ENCODE measurements at regions of chr1 and their contacts with region 1.

Region 1: DNA sequence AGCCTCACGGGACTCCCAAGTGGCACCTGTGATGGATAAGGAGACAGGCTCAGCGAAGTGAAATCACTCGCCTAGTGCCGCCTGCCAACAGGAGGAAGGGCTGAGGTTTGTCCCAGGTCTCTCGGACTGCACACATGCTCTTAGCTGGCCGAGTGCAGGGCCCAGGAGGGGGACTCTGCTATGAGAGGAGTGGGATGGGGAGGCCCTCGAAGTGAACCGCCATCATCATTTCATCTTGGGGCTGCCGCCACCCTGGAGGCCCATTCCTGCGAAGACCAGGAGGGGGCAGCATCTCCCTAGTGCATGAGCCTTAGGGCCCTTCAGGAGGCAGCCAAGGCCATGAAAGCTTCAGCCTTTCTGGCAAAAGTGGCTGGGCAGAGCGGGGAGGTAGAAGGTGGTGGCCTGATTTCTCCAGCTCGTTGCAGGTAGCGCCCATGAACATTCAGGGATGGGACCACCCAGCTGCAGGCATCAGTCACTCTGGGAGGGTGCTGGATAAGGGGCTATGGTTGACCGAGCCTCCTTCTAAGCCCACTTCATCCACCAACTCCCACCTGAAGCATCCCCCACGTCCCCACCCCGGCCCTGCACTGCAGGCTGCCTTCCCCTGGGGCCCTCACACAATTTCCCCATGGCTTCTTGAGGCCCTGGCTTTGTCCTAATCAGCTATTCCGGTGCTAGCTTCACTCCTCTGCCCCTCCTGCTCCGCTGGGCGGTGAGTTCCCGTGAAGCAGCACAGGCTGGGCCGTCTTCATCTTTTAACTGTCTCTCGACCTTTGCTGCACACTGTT is 17.2 kb upstream of the RASSF5 start:
- DNase-seq: peak; percentile 56
- H3K4me3 Mint-ChIP-seq: no peak overlapping the region
- H3K27ac Mint-ChIP-seq: no peak overlapping the region
- H3K4me1 Mint-ChIP-seq: peaks cover 7% of the 10 kb centered on the region
- H3K27me3 Mint-ChIP-seq: no peaks in the 10 kb centered on the region

Region 2: DNA sequence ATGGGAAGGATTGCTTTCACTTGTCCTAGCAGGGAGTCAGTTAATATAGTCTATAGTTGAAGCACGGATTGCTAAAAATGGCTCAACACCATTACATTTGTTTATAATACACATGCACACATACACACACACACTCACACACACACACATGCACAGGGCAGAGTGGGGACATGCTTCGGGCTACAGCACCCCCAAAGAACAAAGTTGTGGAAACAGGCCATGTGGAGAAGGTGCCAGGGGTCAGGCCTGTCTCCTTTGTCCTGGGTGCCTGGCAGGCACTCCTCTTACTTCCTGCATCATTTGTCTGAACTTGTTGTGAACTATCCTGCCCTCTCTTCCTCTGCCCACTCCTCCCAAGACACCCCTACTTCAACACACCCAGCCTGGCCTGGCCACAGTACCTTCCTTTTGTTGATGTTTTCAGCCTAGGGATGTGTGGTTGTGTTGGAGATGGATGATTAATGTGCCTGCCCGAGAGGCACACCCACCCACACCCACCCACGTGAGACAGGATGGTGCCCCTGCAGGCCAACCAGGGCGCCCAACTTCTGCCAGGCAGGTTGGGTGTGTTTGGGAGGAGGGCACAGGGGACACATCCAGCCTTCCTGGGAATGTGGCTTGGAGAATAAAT is 34.7 kb after region 1 on chr1:
- intact Hi-C with region 1: loop called (anchors 5 kb)
- DNase-seq: no peak
- H3K4me3 Mint-ChIP-seq: no peak overlapping the region
- H3K27ac Mint-ChIP-seq: no peak overlapping the region
- H3K4me1 Mint-ChIP-seq: peaks cover 4% of the 10 kb centered on the region
- H3K27me3 Mint-ChIP-seq: no peaks in the 10 kb centered on the region